ENCODE measurements at regions of chr3 and their contacts with region 1.

Region 1: GRCh38 chr3:156674046-156674910 is at the start of gene TIPARP:
- DNase-seq: peak; percentile 97
- H3K4me3 Mint-ChIP-seq: peak within 1 kb of the TSS; percentile 93
- H3K27ac Mint-ChIP-seq: peak within 1 kb of the TSS; percentile 88
- H3K4me1 Mint-ChIP-seq: peaks cover 40% of the 10 kb centered on the region
- H3K27me3 Mint-ChIP-seq: no peaks in the 10 kb centered on the region
- total RNA-seq, gene TIPARP: 15.7 to 17.1 TPM

Region 2: DNA sequence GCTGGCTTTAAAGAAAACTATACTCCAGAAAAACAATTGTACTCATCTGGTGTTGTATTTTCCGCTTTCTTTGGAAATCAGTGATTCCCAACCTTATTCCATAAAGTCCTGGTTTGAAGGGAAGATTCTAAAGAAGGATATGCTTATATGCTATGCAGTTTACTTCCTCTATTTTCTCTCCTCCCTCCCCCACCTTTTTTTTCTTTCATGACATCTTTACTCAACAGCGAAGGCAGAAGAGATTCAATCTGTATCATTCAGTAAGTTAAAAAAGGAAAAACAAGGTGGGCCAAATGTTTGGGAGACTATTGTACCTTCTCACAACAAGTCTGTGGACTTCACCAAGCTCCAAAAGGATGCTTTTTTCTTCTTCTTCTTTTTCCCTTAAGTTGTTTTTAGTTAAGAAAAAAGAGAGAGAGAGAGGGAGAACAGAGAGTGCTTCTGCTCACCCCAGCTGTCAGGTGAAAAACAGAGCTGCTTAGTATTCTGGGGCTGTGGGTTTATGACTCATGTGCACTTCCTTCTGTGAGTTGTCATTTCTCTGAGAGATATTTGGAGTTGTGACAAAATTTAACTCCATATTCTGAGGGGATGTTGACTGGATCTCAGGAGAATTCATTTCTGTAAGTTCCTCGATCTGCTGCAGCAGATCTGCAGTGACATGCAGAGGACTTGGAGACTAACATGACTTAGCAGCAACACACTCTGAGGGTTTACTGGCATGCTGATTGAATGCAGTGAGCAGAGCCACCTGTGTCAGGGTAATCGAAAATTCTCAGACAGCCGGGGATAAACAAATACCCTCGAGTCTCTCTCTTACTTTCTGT is 190.1 kb before region 1 on chr3:
- CTCF ChIA-PET with region 1: no interaction called
- intact Hi-C with region 1: loop called (anchors 1 kb)
- DNase-seq: peak; percentile 70
- H3K4me3 Mint-ChIP-seq: peak overlapping the region; percentile 51
- H3K27ac Mint-ChIP-seq: peak overlapping the region; percentile 81
- H3K4me1 Mint-ChIP-seq: peaks cover 42% of the 10 kb centered on the region
- H3K27me3 Mint-ChIP-seq: no peaks in the 10 kb centered on the region

Region 3: DNA sequence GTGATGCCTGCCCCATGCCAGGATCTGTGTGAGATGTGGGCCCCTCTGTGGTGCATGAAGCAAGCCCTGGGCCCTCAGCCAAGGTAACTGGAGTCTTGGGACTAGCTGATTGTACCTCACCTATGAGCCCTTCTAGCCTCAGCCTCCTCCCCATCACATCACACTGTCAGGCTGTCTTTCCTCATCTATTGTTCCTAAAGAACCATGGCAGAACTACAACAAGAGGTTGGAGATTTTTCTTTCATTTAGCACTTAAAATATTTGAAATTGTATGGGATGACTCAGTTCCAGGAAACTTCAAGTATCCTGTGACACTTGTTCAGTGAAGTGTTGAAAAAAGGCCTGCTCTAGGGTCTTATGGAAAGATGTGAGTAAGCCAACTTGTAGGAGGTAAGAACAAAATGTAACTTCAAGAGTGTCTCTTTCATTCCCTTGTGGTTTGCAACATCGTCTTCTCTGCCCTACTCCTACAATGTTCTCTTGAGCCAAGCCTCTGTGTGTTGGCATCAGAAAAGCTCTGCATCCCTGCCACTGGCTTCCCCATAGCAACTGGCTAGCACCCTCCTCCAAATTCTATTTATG is 58.6 kb before region 1 on chr3:
- CTCF ChIA-PET with region 1: interaction called, 3 read pairs
- intact Hi-C with region 1: loop called (anchors 2 kb)
- DNase-seq: no peak
- H3K4me3 Mint-ChIP-seq: no peak overlapping the region
- H3K27ac Mint-ChIP-seq: peak overlapping the region; percentile 65
- H3K4me1 Mint-ChIP-seq: peaks cover 21% of the 10 kb centered on the region
- H3K27me3 Mint-ChIP-seq: peaks cover 3% of the 10 kb centered on the region

Region 4: DNA sequence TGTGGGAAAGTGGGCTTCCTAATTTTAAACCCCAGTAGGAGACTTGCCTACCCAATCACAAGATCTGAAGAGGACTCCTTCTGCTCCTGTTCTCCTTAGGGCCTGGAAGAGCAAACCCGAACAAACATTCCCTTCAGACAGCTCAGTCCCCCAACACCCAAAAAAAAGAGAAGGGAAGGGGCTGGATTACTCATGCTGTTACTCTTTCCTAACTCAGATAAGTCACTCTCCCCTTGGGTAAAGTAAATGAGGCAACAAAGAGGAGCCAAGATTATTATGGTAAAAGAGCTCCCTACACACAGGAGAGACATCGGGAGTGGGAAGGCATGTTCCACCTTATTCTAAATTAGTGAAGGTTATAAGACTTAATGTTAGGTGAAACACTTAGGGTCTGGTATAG is 133.7 kb after region 1 on chr3:
- CTCF ChIA-PET with region 1: no interaction called
- intact Hi-C with region 1: no loop called
- DNase-seq: no peak
- H3K4me3 Mint-ChIP-seq: no peak overlapping the region
- H3K27ac Mint-ChIP-seq: no peak overlapping the region
- H3K4me1 Mint-ChIP-seq: no peaks in the 10 kb centered on the region
- H3K27me3 Mint-ChIP-seq: no peaks in the 10 kb centered on the region

Region 5: DNA sequence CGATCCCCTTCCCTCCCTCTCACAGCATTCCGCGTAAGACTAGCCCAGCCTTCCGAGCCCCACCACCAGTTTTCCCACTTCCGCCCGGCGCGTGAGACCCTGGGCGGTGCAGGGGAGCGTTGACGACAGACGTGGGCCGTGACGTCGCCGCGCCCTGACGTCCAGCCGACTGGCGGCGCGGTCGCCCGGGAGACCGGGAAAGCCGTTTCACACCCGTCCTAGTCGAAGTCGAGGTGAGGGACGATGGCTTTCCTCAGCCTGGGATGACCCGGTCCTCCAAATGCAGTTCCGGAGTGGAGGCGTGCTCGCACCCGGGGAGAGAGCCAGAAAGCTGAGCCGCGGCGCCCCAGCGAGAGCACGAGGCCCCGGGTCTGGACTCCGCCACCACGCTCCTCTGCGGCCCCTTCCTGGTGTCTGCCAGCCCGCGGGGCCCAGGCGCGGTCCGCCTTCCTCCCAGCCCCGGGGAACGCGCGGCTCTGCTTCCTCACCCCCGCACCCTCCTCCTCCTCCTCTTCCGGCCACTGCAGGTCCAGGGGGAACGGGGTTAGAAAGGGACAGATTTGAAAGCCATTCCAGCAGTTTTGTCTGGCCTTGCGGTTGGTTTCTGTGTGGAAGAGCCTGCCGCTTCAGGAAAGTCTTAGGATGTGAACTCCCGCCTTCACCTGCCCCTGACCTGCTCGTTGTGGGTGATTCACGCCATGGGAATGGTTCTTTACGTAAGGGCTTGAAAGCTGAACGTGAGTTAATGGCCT is 152.0 kb after region 1 on chr3 and contains the start of gene LEKR1:
- CTCF ChIA-PET with region 1: interaction called, 4 read pairs
- intact Hi-C with region 1: loop called (anchors 1 kb)
- DNase-seq: peak; percentile 69
- H3K4me3 Mint-ChIP-seq: peak within 1 kb of the TSS; percentile 93
- H3K27ac Mint-ChIP-seq: peak within 1 kb of the TSS; percentile 92
- H3K4me1 Mint-ChIP-seq: peaks cover 16% of the 10 kb centered on the region
- H3K27me3 Mint-ChIP-seq: no peaks in the 10 kb centered on the region
- total RNA-seq, gene LEKR1: 0.43 to 0.77 TPM

Region 6: DNA sequence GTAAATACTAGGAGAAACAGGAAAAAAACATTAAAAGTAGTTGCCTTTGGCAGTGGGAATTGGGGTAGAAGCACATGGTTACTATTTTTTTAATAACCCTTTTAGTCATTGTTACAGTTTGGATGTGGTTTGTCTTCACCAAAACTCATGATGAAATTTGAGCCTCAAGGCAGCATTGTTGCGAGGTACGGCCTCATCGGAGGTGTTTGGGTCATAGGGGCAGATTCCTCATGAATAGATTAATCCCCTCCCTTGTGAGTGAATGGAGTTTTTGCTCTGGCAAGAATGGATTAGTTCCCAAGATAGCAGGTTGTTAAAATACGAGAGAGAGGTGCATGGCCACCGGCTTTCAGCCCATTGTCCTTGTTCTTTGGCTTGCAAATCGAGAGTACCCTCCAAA is 244.5 kb after region 1 on chr3:
- CTCF ChIA-PET with region 1: no interaction called
- intact Hi-C with region 1: no loop called
- DNase-seq: no peak
- H3K4me3 Mint-ChIP-seq: no peak overlapping the region
- H3K27ac Mint-ChIP-seq: no peak overlapping the region
- H3K4me1 Mint-ChIP-seq: no peaks in the 10 kb centered on the region
- H3K27me3 Mint-ChIP-seq: no peaks in the 10 kb centered on the region

Region 7: GRCh38 chr3:157130467-157131251 is 456.4 kb after region 1 on chr3:
- CTCF ChIA-PET with region 1: interaction called, 4 read pairs
- intact Hi-C with region 1: loop called (anchors 1 kb)
- DNase-seq: peak; percentile 85
- H3K4me3 Mint-ChIP-seq: peak overlapping the region; percentile 61
- H3K27ac Mint-ChIP-seq: peak overlapping the region; percentile 98
- H3K4me1 Mint-ChIP-seq: peaks cover 48% of the 10 kb centered on the region
- H3K27me3 Mint-ChIP-seq: no peaks in the 10 kb centered on the region

Region 8: DNA sequence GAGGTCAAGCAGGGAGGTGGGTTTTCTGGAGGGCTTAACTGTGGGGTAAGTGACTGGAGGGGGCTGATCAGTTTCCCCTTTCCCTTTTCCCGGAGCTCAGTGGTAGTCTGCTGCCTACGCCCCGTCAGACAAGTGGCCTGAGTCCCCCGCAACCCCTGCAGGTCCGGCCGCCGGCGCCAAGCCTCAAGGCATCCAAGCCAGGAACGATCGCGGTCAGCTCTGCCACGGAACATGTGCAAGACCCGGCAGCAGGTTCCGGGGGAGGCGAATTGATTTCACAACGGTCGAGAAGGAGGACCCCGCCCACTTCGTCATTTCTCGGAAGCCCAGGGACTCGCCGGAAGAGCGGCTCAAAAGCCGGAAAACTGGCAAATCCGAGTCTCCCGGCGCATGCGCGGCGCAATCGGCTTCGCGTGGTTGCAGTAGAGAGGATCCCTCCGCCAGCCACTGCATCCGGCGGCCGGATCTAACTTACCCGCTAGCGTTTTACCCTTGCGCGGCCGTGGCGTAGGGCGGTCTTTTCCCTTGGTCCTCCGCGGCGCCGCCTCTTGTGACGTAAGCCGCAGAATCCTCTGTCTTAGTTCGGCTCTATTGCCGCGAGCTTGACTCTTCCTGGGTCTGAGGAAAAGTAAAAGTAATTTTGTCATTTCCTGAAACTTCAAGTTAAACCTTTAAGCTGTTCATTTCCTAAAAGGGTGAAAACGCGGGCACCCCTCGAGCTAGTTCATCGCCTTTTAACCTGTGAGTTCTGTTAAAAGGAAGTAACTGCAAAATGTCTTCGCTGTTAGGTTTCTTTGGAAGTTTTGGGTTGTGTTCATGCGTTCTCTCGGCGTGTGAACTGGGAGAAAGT is 500.6 kb after region 1 on chr3:
- CTCF ChIA-PET with region 1: no interaction called
- intact Hi-C with region 1: loop called (anchors 1 kb)
- DNase-seq: peak; percentile 99
- H3K4me3 Mint-ChIP-seq: peak overlapping the region; percentile 85
- H3K27ac Mint-ChIP-seq: peak overlapping the region; percentile 95
- H3K4me1 Mint-ChIP-seq: peaks cover 25% of the 10 kb centered on the region
- H3K27me3 Mint-ChIP-seq: no peaks in the 10 kb centered on the region

Region 9: GRCh38 chr3:157311633-157312375 is 637.5 kb after region 1 on chr3:
- CTCF ChIA-PET with region 1: no interaction called
- intact Hi-C with region 1: no loop called
- DNase-seq: no peak
- H3K4me3 Mint-ChIP-seq: no peak overlapping the region
- H3K27ac Mint-ChIP-seq: no peak overlapping the region
- H3K4me1 Mint-ChIP-seq: no peaks in the 10 kb centered on the region
- H3K27me3 Mint-ChIP-seq: no peaks in the 10 kb centered on the region

Measured in activated naive CD4-positive, alpha-beta T cell treated with anti-CD3 and anti-CD28 coated beads for 36 hours (primary cell).